Ovary (tissue), 10 donors: ENCODE measurements at regions of chr4 and their contacts with region 1.

Region 1: DNA sequence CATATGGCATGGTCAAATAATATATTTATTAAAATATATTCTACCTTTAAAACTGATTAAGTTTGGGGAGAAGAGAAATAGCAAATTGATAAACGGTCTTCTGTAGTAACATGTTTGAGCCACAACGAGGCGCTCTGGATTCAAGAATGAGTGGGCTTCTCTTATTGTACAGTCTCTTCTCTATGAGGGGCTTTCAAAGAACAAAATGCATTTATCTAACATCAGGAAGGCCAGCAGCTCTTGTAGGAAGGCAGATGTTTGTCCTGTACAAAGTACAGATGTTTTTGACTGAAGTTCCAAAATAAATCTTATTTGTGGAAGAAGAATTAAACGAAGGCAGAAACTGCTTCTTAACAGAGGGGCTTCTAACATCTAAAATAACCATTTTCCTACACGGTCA is 153.6 kb downstream of the RASL11B start:
- DNase-seq: peak; percentile 58 to 76 (median 59)
- H3K4me3 ChIP-seq: no peak overlapping the region
- H3K27ac ChIP-seq: peak overlapping the region in 1 of 2 donors; percentile 38
- H3K4me1 ChIP-seq: peaks cover 25% of the 10 kb centered on the region
- H3K27me3 ChIP-seq: no peaks in the 10 kb centered on the region
- CTCF ChIP-seq: peak; percentile 59 to 79 (median 75)
- EP300 ChIP-seq: no peak
- POLR2A ChIP-seq: no peak

Region 2: GRCh38 chr4:52684896-52685295 is 330.8 kb before region 1 on chr4:
- intact Hi-C with region 1: no loop called
- DNase-seq: no peak
- H3K4me3 ChIP-seq: no peak overlapping the region
- H3K27ac ChIP-seq: no peak overlapping the region
- H3K4me1 ChIP-seq: no peaks in the 10 kb centered on the region
- H3K27me3 ChIP-seq: no peaks in the 10 kb centered on the region
- CTCF ChIP-seq: no peak
- EP300 ChIP-seq: no peak
- POLR2A ChIP-seq: no peak

Region 3: GRCh38 chr4:52728691-52729240 is 286.9 kb before region 1 on chr4:
- intact Hi-C with region 1: no loop called
- DNase-seq: no peak
- H3K4me3 ChIP-seq: no peak overlapping the region
- H3K27ac ChIP-seq: no peak overlapping the region
- H3K4me1 ChIP-seq: no peaks in the 10 kb centered on the region
- H3K27me3 ChIP-seq: no peaks in the 10 kb centered on the region
- CTCF ChIP-seq: no peak
- EP300 ChIP-seq: no peak
- POLR2A ChIP-seq: no peak

Region 4: GRCh38 chr4:53196882-53197771 is 181.4 kb after region 1 on chr4:
- intact Hi-C with region 1: loop called in 1 of 4 experiments (anchors 10 kb)
- DNase-seq: no peak
- H3K4me3 ChIP-seq: no peak overlapping the region
- H3K27ac ChIP-seq: no peak overlapping the region
- H3K4me1 ChIP-seq: no peaks in the 10 kb centered on the region
- H3K27me3 ChIP-seq: no peaks in the 10 kb centered on the region
- CTCF ChIP-seq: peak; percentile 50 to 83 (median 62)
- EP300 ChIP-seq: no peak
- POLR2A ChIP-seq: no peak

Region 5: DNA sequence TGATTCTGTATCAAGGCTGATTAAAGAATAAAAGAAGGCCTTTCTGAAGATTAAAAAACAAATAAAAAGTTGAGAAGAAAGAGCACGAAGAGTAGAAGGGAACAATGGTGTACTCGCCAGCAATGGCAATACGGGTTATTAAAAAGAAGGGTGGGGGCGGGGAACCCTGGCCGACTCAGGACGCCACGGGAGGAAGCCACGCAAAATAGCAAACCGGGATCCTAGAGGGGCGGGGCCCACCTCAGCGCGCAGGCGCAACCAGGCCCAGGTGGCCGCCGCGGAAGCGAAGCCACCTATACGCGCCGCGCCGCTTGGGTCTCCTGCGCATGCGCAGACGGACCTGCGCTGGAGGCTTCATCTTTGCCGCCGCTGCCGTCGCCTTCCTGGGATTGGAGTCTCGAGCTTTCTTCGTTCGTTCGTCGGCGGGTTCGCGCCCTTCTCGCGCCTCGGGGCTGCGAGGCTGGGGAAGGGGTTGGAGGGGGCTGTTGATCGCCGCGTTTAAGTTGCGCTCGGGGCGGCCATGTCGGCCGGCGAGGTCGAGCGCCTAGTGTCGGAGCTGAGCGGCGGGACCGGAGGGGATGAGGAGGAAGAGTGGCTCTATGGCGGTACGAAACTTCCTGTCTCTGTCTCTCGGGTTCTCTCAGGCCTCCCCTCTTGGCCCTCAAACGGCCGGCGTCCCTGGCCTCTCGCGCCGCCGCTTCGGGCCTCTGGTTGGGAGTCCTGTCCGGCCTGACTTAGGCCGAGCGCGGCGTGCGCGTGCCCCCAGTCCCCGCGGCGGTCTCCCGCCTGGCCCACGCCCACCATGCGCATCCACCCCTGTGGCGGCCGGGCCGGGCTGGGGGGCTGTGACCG is 361.9 kb after region 1 on chr4 and contains the start of gene FIP1L1:
- intact Hi-C with region 1: loop called in 1 of 4 experiments (anchors 10 kb)
- DNase-seq: peak; percentile 94 to 98 (median 97)
- H3K4me3 ChIP-seq: peak within 1 kb of the TSS; percentile 96
- H3K27ac ChIP-seq: peak within 1 kb of the TSS; percentile 42 to 85
- H3K4me1 ChIP-seq: peaks cover 3% of the 10 kb centered on the region
- H3K27me3 ChIP-seq: no peaks in the 10 kb centered on the region
- CTCF ChIP-seq: no peak
- EP300 ChIP-seq: no peak
- POLR2A ChIP-seq: peak; percentile 84
- total RNA-seq, gene FIP1L1: 50.7 to 67.9 (median 66.1) TPM

Region 6: DNA sequence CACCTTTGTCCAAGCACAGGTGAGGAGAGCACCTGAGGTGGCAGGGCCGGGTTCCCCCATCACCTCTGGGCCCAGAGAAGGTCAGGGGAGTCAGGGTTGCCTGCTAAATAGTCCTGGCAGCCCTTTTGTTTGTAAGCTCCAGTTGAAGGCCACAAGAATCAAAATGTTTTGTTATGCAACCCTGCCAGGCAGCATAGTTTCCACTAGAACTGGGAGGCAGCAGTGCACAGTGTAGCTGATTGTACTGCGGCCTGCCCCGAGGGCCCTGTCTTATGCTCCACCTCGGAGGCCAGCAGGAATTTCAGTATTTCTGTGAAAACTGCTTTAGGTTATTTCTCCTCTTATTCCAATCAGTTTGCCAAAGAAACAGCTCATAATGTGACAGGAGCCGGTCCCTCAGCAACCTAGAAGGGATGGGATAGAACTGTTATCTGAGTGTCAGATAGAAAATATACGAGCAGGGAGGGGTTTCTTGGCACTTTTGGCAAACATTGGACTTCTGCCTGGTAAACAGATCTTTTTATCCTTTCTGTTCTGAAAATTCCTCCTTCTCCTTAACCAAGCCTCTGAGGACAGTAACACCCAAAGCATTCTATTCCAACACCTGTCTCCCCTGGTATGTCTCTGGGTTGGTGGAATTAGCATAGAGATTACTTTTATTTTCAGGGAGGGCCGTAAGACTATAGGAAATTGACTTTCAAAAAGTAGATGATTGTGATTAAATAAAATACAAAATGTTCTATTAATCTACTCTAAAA is 482.0 kb after region 1 on chr4:
- intact Hi-C with region 1: loop called in 1 of 4 experiments (anchors 5 kb)
- DNase-seq: peak; percentile 48 to 79 (median 74)
- H3K4me3 ChIP-seq: no peak overlapping the region
- H3K27ac ChIP-seq: peak overlapping the region in 1 of 2 donors; percentile 79
- H3K4me1 ChIP-seq: peaks cover 22% of the 10 kb centered on the region
- H3K27me3 ChIP-seq: no peaks in the 10 kb centered on the region
- CTCF ChIP-seq: no peak
- EP300 ChIP-seq: no peak
- POLR2A ChIP-seq: no peak

Region 7: DNA sequence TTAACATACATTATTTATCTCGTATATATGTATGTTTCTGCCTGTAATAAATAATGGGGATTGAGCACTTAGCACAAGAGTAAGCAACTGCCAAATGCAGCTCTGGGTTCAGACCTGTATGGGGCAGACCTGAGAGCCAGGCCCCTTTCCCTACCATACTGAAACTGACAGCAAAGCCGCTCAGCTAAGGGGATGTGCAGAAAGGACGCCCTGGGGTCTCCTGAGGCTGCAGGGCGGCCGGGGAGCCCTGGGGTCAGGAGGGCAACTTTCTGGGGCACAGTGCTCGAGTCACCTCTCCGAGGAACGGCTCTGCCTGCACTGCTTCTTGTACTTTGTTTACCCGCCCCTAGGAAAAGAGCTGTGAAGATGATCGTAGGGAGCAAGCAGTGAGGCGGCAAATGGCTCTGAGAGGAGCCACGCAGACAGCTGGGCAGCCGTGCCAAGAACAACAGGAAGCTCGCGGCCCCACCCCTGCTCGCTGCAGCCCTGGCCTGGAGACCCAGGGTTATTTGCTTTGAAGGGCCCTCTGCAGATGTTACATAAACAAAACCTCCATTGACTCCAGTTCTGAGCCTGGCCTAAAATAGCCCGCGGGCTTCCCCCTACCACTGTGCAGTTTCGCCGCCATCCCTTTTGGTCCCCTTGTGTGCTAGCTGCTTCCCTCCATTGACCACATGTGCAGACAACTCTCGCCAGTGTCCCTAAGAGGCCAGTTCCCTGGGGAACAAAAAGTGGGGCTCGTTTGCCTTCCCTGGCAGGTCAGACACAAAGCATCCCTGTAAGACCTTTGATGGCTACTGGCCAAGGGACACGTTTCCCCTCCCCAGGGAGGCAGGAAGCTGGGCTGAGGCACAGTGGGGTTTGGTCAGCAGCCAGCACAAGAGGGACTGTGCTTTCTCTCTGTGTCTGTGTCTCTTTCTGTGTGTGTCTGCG is 686.9 kb after region 1 on chr4:
- intact Hi-C with region 1: loop called in 1 of 4 experiments (anchors 10 kb)
- DNase-seq: peak; percentile 81 to 90 (median 87)
- H3K4me3 ChIP-seq: no peak overlapping the region
- H3K27ac ChIP-seq: peak overlapping the region in 1 of 2 donors; percentile 52
- H3K4me1 ChIP-seq: peaks cover 8% of the 10 kb centered on the region
- H3K27me3 ChIP-seq: no peaks in the 10 kb centered on the region
- CTCF ChIP-seq: no peak
- EP300 ChIP-seq: no peak
- POLR2A ChIP-seq: no peak

Region 8: GRCh38 chr4:53786632-53787031 is 771.0 kb after region 1 on chr4:
- intact Hi-C with region 1: loop called in 1 of 4 experiments (anchors 10 kb)
- DNase-seq: peak in 2 of 5 donors; percentile 18 to 27
- H3K4me3 ChIP-seq: no peak overlapping the region
- H3K27ac ChIP-seq: no peak overlapping the region
- H3K4me1 ChIP-seq: peaks cover 8% of the 10 kb centered on the region
- H3K27me3 ChIP-seq: no peaks in the 10 kb centered on the region
- CTCF ChIP-seq: no peak
- EP300 ChIP-seq: no peak
- POLR2A ChIP-seq: no peak

Region 9: GRCh38 chr4:53908661-53909078 is 893.0 kb after region 1 on chr4:
- intact Hi-C with region 1: loop called in 2 of 4 experiments (anchors 10 kb)
- DNase-seq: peak in 3 of 5 donors; percentile 39 to 67 (median 56)
- H3K4me3 ChIP-seq: no peak overlapping the region
- H3K27ac ChIP-seq: peak overlapping the region in 1 of 2 donors; percentile 67
- H3K4me1 ChIP-seq: peaks cover 6% of the 10 kb centered on the region
- H3K27me3 ChIP-seq: no peaks in the 10 kb centered on the region
- CTCF ChIP-seq: peak; percentile 52 to 74 (median 72)
- EP300 ChIP-seq: no peak
- POLR2A ChIP-seq: no peak

Region 10: DNA sequence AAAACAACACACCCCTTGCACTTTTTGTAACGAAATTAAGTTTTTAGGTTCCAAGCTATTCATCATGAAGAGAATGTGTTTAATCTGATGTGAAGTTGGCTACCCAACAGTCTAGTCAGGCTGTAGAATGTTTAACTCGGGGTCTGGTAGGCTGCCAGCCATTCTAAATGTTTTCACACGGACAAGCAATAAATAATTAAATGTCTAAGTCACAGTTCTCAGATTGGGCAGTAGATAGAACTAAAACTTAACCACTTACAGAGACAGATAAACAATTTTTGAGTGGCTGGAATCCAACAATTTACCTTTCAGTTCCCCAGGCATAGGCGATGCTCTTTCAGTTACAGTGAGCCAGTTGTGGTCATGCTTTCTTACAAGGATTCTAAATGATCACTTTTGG is 982.2 kb after region 1 on chr4:
- intact Hi-C with region 1: no loop called
- DNase-seq: no peak
- H3K4me3 ChIP-seq: no peak overlapping the region
- H3K27ac ChIP-seq: no peak overlapping the region
- H3K4me1 ChIP-seq: peaks cover 6% of the 10 kb centered on the region
- H3K27me3 ChIP-seq: no peaks in the 10 kb centered on the region
- CTCF ChIP-seq: no peak
- EP300 ChIP-seq: no peak
- POLR2A ChIP-seq: no peak